Mammary epithelial cell (primary cell): ENCODE measurements at regions of chr4 and their contacts with region 1.

Region 1: DNA sequence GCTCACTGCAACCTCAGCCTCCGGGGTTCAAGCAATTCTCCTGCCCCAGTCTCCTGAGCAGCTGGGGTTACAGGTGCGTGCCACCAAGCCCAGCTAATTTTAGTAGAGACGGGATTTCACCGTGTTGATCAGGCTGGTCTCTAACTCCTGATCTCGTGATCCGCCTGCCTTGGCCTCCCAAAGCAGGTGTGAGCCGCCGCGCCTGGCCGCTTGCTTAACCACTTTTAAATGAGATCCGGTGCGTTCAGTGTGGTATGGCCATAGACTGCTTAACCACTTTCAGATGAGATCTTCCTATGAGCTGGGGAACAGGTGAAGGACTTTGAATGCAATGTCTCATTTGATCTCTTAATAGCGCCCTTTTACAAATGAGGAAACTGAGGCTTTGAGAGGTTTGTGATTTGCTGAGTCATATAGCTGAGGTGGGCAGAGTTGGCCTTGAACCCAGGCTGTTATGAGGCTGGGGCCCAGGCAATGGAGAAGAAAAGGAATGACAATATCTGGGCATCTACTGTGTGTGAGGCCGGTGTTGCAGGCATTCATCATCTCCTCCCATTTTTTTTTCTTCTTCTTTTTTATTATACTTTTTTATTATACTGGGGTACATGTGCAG is 41.9 kb upstream of the NSG1 start:
- DNase-seq: no peak
- H3K4me3 ChIP-seq: no peak overlapping the region
- H3K27ac ChIP-seq: no peak overlapping the region
- H3K4me1 ChIP-seq: no peaks in the 10 kb centered on the region
- H3K27me3 ChIP-seq: peaks cover 3% of the 10 kb centered on the region
- CTCF ChIP-seq: no peak

Region 2: GRCh38 chr4:4260253-4260652 is 84.8 kb before region 1 on chr4:
- CTCF ChIA-PET with region 1: no interaction called
- dilution Hi-C with region 1: no loop called
- in situ Hi-C with region 1: loop called in 1 of 2 experiments (anchors 5 kb)
- intact Hi-C with region 1: no loop called
- DNase-seq: peak; percentile 50
- H3K4me3 ChIP-seq: no peak overlapping the region
- H3K27ac ChIP-seq: no peak overlapping the region
- H3K4me1 ChIP-seq: no peaks in the 10 kb centered on the region
- H3K27me3 ChIP-seq: no peaks in the 10 kb centered on the region
- CTCF ChIP-seq: peak; percentile 54 to 64

Region 3: GRCh38 chr4:4488405-4489404 is 143.7 kb after region 1 on chr4:
- CTCF ChIA-PET with region 1: no interaction called
- dilution Hi-C with region 1: no loop called
- in situ Hi-C with region 1: no loop called
- intact Hi-C with region 1: no loop called
- DNase-seq: peak; percentile 54
- H3K4me3 ChIP-seq: no peak overlapping the region
- H3K27ac ChIP-seq: no peak overlapping the region
- H3K4me1 ChIP-seq: no peaks in the 10 kb centered on the region
- H3K27me3 ChIP-seq: no peaks in the 10 kb centered on the region
- CTCF ChIP-seq: peak; percentile 92 to 94

Region 4: GRCh38 chr4:4749137-4749536 is 404.1 kb after region 1 on chr4:
- CTCF ChIA-PET with region 1: no interaction called
- dilution Hi-C with region 1: no loop called
- in situ Hi-C with region 1: no loop called
- intact Hi-C with region 1: no loop called
- DNase-seq: no peak
- H3K4me3 ChIP-seq: no peak overlapping the region
- H3K27ac ChIP-seq: no peak overlapping the region
- H3K4me1 ChIP-seq: no peaks in the 10 kb centered on the region
- H3K27me3 ChIP-seq: no peaks in the 10 kb centered on the region
- CTCF ChIP-seq: no peak